Activated CD4-positive, alpha-beta T cell treated with anti-CD3 and anti-CD28 coated beads for 36 hours (primary cell): ENCODE measurements at regions of chr3 and their contacts with region 1.

Region 1: DNA sequence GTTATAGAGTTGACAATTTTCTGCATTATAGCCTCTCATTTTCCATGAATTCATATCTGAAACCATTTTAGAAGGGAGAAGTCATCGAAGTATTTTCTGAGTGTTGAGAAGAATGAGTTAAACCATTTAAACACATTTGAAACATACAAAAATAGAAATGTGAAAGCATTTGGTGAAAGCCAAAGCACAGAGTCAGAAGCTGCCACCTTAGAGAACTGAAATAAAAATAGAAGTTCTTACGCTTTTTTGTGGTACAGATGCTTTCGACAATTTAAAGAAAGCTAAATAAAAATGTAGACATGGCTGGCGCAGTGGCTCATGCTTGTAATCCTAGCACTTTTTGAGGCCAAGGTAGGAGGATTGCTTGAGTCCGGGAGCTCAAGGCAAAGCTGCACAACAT is 9.0 kb downstream of the FANCD2OS start:
- DNase-seq: no peak
- ATAC-seq: no peak
- H3K4me3 Mint-ChIP-seq: no peak overlapping the region
- H3K27ac Mint-ChIP-seq: no peak overlapping the region
- H3K4me1 Mint-ChIP-seq: no peaks in the 10 kb centered on the region
- H3K27me3 Mint-ChIP-seq: no peaks in the 10 kb centered on the region

Region 2: DNA sequence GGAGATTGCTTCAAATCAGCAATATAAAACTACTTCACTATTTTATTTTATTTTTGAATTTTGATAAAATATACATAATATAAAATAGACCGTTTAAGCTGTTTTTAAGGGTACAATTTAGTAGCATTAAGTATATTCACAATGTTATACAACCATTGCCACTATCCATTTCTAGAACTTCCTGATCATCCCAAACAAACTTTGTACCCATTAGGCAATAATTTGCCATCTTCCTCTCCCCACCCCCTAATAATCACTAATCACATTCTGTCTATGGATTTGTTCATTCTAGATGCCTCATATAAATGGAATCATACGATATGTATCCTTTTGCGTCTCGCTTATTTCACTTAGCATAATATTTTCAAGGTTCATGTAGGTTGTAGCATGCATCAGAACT is 43.9 kb before region 1 on chr3:
- CTCF ChIA-PET with region 1: no interaction called
- POLR2A ChIA-PET with region 1: no interaction called
- intact Hi-C with region 1: loop called in 1 of 2 experiments (anchors 5 kb)
- DNase-seq: no peak
- ATAC-seq: no peak
- H3K4me3 Mint-ChIP-seq: no peak overlapping the region
- H3K27ac Mint-ChIP-seq: no peak overlapping the region
- H3K4me1 Mint-ChIP-seq: no peaks in the 10 kb centered on the region
- H3K27me3 Mint-ChIP-seq: no peaks in the 10 kb centered on the region

Region 3: GRCh38 chr3:10505050-10505790 is 406.2 kb after region 1 on chr3 and contains the start of gene ATP2B2:
- CTCF ChIA-PET with region 1: no interaction called
- POLR2A ChIA-PET with region 1: no interaction called
- intact Hi-C with region 1: no loop called
- DNase-seq: peak; percentile 38
- ATAC-seq: peak; percentile 63
- H3K4me3 Mint-ChIP-seq: peak within 1 kb of the TSS; percentile 23
- H3K27ac Mint-ChIP-seq: no peak within 1 kb of the TSS
- H3K4me1 Mint-ChIP-seq: peaks cover 5% of the 10 kb centered on the region
- H3K27me3 Mint-ChIP-seq: peaks cover 12% of the 10 kb centered on the region
- total RNA-seq, gene ATP2B2: 0.05 TPM in 1 of 2 experiments, not detected in the other